HEK293T (cell line): ENCODE measurements at regions of chr4 and their contacts with region 1.

Region 1: DNA sequence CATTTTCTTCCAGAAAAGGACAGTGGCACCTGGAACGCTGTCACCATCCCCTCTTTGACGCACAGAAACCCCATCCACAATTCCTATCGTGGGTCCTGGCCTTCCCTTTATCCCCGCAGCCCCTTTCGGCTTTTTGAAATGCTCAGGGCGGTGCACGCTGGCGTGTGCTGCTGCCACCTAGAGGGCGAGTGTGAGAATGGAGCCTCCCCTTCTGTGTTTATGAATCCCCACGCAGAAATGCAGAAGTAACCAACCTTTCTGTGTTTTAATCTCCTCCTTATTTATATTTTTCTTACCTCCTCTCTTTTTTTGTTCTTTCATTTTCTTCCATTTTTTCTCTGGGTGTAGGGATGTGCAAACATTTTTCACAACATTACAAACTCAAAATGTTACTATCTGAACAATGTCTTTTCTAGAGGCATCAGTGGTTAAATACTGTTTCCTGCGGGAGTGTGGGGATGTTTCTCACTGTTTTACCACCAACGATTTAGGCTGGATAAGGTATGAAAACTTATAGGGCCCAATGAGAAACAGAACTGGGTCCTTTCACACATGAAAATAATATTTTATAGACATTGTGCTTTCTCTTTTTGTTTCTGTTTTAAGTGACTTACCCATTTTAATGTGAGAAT is 50.0 kb downstream of the TMA16 start:
- DNase-seq: peak; percentile 73

Region 2: GRCh38 chr4:163484906-163485305 is 59.6 kb before region 1 on chr4:
- CTCF ChIA-PET with region 1: interaction called, 10 read pairs
- POLR2A ChIA-PET with region 1: no interaction called
- DNase-seq: peak; percentile 51

Region 3: DNA sequence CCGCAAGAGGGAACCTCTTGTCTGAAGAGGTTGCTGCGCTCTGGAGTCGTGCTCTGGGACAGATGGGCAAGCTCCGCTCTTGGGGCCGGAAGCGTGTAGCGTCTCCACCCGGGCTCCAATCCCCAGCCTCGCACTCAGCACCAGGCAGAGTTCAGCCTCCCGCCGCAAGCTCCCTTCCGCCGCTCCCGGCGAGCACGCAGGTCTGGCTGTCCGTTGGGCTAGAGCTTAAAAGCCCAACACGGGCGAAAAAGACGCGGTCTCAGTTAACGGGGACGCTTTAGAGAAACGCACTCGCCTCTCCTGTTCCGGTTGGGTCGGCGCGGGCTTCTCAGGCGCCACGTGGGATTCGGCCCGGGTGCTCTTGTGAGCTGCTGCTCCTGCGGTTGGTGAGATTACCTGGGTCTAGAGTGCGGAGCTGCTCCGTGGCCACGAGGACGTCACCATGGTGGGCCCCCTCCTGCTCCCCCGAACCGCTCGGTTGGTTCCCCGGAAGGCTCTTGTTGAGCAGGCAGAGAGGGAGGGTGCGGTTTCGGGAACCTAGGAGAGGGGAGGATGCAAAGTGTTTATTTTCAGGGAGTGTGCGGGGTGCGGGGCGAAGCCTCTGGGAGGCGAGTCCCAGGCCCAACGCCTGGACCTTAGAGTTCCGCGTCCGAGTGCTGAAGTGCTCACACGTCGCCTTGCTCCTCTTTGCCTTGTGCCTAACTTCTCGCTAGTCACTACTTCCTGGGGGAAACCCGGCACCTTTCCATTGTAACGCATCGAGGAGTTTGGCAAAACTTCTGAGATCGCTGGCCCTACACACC is 50.0 kb before region 1 on chr4 and contains the start of gene TMA16:
- CTCF ChIA-PET with region 1: no interaction called
- POLR2A ChIA-PET with region 1: interaction called, 23 read pairs
- DNase-seq: peak; percentile 83